Activated T-helper 2 cell treated with anti-CD3 and anti-CD28 coated beads, Interferon-gamma antibody, Interleukin-2, Interleukin-4, amounts not matched to agents 10 μg/mL and 5 μg/mL and 100 μg/mL, durations not matched to agents 14 hours and 24 hours and 36 hours (primary cell): ENCODE measurements at regions of chr9 and their contacts with region 1.

Region 1: GRCh38 chr9:110143950-110144545 is 63.9 kb downstream of the C9orf152 start:
- DNase-seq: peak; percentile 34
- H3K4me3 Mint-ChIP-seq: peak overlapping the region; percentile 51
- H3K27ac Mint-ChIP-seq: peak overlapping the region; percentile 95
- H3K4me1 Mint-ChIP-seq: peaks cover 79% of the 10 kb centered on the region
- H3K27me3 Mint-ChIP-seq: no peaks in the 10 kb centered on the region

Region 2: GRCh38 chr9:110099236-110100095 is 44.6 kb before region 1 on chr9:
- intact Hi-C with region 1: loop called (anchors 5 kb)
- DNase-seq: no peak
- H3K4me3 Mint-ChIP-seq: no peak overlapping the region
- H3K27ac Mint-ChIP-seq: no peak overlapping the region
- H3K4me1 Mint-ChIP-seq: peaks cover 52% of the 10 kb centered on the region
- H3K27me3 Mint-ChIP-seq: no peaks in the 10 kb centered on the region

Region 3: GRCh38 chr9:110116543-110116885 is 27.5 kb before region 1 on chr9:
- intact Hi-C with region 1: no loop called
- DNase-seq: no peak
- H3K4me3 Mint-ChIP-seq: no peak overlapping the region
- H3K27ac Mint-ChIP-seq: peak overlapping the region; percentile 33
- H3K4me1 Mint-ChIP-seq: peaks cover 23% of the 10 kb centered on the region
- H3K27me3 Mint-ChIP-seq: no peaks in the 10 kb centered on the region